Activated B cell treated with CpG ODN at 0.5 μM for 24 hours (primary cell): ENCODE measurements at regions of chr1 and their contacts with region 1.

Region 1: DNA sequence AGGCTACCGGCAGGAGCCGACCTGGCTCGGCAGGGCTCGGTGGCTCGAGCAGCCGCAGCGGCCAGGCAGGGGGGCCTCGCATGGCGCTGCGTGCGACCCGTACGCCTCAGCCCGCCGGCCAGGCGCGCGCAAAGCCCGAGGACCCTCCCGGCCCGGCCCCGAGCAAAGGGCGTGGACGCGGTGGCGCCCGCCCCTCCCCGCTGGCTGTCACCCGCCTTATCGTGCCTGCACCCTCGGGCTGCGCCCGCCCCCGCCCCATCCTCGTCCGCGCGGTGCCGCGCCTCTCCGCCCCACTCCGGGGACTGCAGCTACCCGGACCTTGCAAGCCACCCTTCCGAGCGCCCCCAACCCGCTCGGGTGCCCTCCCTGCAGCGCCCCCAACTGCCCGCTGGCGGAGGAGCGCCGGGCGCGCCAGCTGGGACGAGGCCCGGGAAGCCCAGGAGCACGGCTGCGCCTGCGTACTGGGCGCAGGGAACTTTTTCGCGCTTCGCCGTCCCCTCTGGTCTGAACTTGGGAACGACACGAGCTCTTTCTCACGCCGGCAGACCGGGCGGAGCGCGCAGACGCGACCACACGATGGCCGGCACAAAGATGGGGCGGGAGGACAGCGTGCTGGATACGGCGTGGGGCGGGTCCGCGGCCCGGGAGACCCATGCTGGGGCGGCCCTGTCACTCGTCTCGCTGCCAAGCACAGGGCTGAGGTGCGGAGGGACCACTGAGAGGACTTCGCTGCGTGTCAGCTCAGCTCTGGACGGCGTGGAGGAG is at the start of gene ABCB10:
- DNase-seq: peak; percentile 91
- ATAC-seq: peak; percentile 80
- H3K4me3 Mint-ChIP-seq: peak within 1 kb of the TSS; percentile 95
- H3K27ac Mint-ChIP-seq: peak within 1 kb of the TSS; percentile 90
- H3K4me1 Mint-ChIP-seq: peaks cover 31% of the 10 kb centered on the region
- H3K27me3 Mint-ChIP-seq: no peaks in the 10 kb centered on the region
- CTCF ChIP-seq: no peak
- total RNA-seq, gene ABCB10: 11.7 and 14.5 TPM in 2 replicates

Region 2: DNA sequence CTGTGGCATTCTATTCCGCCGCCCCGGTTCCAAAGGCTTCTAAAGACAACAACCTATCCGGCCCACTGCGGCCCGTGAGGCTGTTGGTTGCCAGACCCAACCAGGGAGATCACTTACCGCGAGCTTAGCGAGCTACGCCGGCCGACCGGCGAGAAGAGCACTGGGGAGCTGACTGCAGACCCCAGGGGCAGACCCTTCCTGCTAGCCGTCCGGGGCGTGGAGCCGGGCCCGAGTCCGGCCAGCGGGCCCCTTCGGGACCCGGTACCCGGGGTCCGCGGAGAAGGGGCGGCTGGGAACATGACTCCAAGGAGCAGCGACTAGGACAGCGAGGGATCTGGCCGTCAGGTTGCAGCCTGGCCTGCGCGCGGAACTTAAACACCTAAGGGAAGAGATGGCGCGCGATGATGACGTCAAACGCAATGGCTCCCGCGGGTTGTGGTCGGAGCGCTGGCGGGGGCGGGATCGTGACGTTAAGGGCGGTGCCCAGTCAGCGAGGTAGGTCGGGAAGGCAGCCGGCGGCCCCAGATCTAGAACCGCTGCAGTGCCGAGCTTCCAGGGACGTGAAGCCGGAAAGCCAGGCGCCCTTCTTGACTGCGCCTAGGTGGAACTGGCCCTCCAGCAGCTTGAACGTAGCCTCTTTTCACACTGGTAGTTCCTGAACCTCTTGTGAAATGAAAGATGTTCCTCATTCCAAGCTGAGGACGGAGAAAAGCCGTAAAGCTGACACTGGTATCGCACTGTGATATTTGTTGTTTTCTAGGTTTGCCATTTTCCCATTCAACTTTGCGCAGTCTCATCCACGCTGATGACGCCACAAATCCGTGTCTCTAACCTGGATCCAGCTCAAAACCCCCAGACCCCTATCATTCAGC is 50.6 kb before region 1 on chr1 and contains the start of gene NUP133:
- CTCF ChIA-PET with region 1: interaction called, 3 read pairs
- POLR2A ChIA-PET with region 1: interaction called, 15 read pairs
- intact Hi-C with region 1: loop called (anchors 1 kb)
- DNase-seq: peak; percentile 97
- ATAC-seq: peak; percentile 92
- H3K4me3 Mint-ChIP-seq: peak within 1 kb of the TSS; percentile 90
- H3K27ac Mint-ChIP-seq: peak within 1 kb of the TSS; percentile 97
- H3K4me1 Mint-ChIP-seq: peaks cover 26% of the 10 kb centered on the region
- H3K27me3 Mint-ChIP-seq: peaks cover 1% of the 10 kb centered on the region
- CTCF ChIP-seq: no peak
- total RNA-seq, gene NUP133: 49.6 and 56.2 TPM in 2 replicates

Region 3: GRCh38 chr1:229579059-229579673 is 20.4 kb after region 1 on chr1:
- CTCF ChIA-PET with region 1: interaction called, 7 read pairs
- POLR2A ChIA-PET with region 1: interaction called, 9 read pairs
- intact Hi-C with region 1: loop called (anchors 1 kb)
- DNase-seq: no peak
- ATAC-seq: peak; percentile 91
- H3K4me3 Mint-ChIP-seq: peak overlapping the region; percentile 77
- H3K27ac Mint-ChIP-seq: peak overlapping the region; percentile 69
- H3K4me1 Mint-ChIP-seq: peaks cover 13% of the 10 kb centered on the region
- H3K27me3 Mint-ChIP-seq: no peaks in the 10 kb centered on the region
- CTCF ChIP-seq: no peak

Region 4: DNA sequence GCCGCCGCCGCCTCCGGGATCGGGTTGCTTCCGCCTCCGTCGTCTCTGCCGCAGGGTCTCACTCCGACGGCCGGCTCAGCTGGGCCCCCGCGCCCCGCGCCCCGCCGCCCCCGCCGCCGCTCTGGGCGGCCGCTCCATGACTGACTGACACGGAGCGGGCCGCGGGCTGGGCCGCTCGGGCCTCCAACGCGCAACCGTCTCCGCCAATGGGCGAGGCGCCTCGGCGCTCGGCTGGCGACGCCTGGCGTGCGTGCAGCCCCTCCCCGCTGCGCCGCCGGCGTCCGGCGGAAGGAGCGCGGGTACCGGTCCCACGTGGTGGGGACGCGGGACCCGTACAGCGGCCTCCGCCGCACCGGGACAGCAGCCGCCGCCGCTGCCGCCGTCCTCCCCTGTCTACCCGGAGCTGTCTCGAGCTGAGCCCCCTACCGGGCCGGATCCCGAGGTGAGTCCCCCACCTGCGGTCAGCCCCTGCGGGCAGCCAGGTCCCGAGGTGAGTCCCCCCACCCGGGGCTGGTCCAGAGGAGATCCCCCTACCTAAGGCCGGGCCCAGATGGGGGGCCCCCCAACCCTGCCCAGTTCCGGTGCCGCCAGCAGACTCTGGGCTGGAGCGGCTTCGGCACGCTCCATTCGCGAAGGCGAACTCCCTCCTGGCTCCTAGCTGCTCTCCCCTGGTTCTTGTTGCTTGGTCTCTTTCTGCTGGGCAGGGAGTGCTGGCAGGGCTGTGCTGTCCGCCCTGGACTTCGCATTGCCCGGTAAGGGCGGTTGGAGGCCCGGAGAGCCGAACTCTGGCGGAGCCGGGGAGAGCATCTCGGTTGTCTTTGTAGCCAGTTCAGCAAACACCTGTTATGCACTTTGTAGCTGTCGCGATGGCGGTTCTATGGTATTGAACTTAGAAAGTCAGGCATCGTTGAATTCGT is 67.4 kb after region 1 on chr1 and contains the starts of genes TAF5L and URB2:
- CTCF ChIA-PET with region 1: interaction called, 11 read pairs
- POLR2A ChIA-PET with region 1: interaction called, 46 read pairs
- intact Hi-C with region 1: loop called (anchors 1 kb)
- DNase-seq: peak; percentile 86
- ATAC-seq: peak; percentile 92
- H3K4me3 Mint-ChIP-seq: peak within 1 kb of the TSS; percentile 99
- H3K27ac Mint-ChIP-seq: peak within 1 kb of the TSS; percentile 92
- H3K4me1 Mint-ChIP-seq: peaks cover 58% of the 10 kb centered on the region
- H3K27me3 Mint-ChIP-seq: no peaks in the 10 kb centered on the region
- CTCF ChIP-seq: no peak
- total RNA-seq, gene TAF5L: 22.0 and 24.4 TPM in 2 replicates
- total RNA-seq, gene URB2: 17.4 and 21.8 TPM in 2 replicates

Region 5: GRCh38 chr1:229781453-229781852 is 222.7 kb after region 1 on chr1:
- CTCF ChIA-PET with region 1: no interaction called
- POLR2A ChIA-PET with region 1: no interaction called
- intact Hi-C with region 1: no loop called
- DNase-seq: no peak
- ATAC-seq: no peak
- H3K4me3 Mint-ChIP-seq: no peak overlapping the region
- H3K27ac Mint-ChIP-seq: no peak overlapping the region
- H3K4me1 Mint-ChIP-seq: no peaks in the 10 kb centered on the region
- H3K27me3 Mint-ChIP-seq: peaks cover 9% of the 10 kb centered on the region
- CTCF ChIP-seq: no peak

Region 6: GRCh38 chr1:229972600-229973296 is 414.0 kb after region 1 on chr1:
- CTCF ChIA-PET with region 1: no interaction called
- POLR2A ChIA-PET with region 1: no interaction called
- intact Hi-C with region 1: no loop called
- DNase-seq: no peak
- ATAC-seq: no peak
- H3K4me3 Mint-ChIP-seq: no peak overlapping the region
- H3K27ac Mint-ChIP-seq: no peak overlapping the region
- H3K4me1 Mint-ChIP-seq: no peaks in the 10 kb centered on the region
- H3K27me3 Mint-ChIP-seq: no peaks in the 10 kb centered on the region
- CTCF ChIP-seq: no peak

Region 7: GRCh38 chr1:231528172-231529029 is 1969.6 kb after region 1 on chr1 and contains the start of gene TSNAX:
- CTCF ChIA-PET with region 1: no interaction called
- POLR2A ChIA-PET with region 1: no interaction called
- intact Hi-C with region 1: loop called (anchors 2 kb)
- DNase-seq: peak; percentile 89
- ATAC-seq: peak; percentile 95
- H3K4me3 Mint-ChIP-seq: peak within 1 kb of the TSS; percentile 99
- H3K27ac Mint-ChIP-seq: peak within 1 kb of the TSS; percentile 100
- H3K4me1 Mint-ChIP-seq: peaks cover 33% of the 10 kb centered on the region
- H3K27me3 Mint-ChIP-seq: no peaks in the 10 kb centered on the region
- CTCF ChIP-seq: no peak
- total RNA-seq, gene TSNAX: 30.0 and 38.7 TPM in 2 replicates